Psoas muscle (tissue), 8 donors: ENCODE measurements at regions of chr11 and their contacts with region 1.

Region 1: GRCh38 chr11:129996113-129996870 is 6.3 kb downstream of the PRDM10 start:
- DNase-seq: no peak
- ATAC-seq: no peak
- H3K4me3 ChIP-seq: no peak overlapping the region
- H3K27ac ChIP-seq: no peak overlapping the region
- H3K4me1 ChIP-seq: peaks cover 33% of the 10 kb centered on the region
- H3K27me3 ChIP-seq: no peaks in the 10 kb centered on the region
- CTCF ChIP-seq: no peak

Region 2: GRCh38 chr11:129922674-129923073 is 73.6 kb before region 1 on chr11:
- intact Hi-C with region 1: loop called in 1 of 2 experiments (anchors 5 kb)
- DNase-seq: no peak
- ATAC-seq: no peak
- H3K4me3 ChIP-seq: no peak overlapping the region
- H3K27ac ChIP-seq: no peak overlapping the region
- H3K4me1 ChIP-seq: no peaks in the 10 kb centered on the region
- H3K27me3 ChIP-seq: no peaks in the 10 kb centered on the region
- CTCF ChIP-seq: no peak

Region 3: DNA sequence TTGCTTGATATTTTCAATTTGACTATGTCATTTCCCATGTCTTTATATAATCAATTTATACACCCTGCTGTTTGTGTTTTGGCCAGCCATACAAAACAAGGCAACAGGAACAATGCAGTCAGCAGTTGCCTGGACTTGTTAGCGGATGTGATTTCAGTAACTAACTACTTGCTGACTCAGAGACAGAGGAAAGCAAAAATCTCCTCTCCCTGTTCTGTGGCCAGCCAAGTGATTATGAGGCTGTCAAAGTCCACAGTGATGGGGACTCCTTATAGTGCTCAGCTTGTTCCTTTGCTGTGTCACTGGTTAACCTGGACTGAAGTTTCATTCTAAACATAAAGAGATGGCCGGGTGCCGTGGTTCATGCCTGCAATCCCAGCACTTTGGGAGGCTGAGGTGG is 40.8 kb after region 1 on chr11:
- intact Hi-C with region 1: no loop called
- DNase-seq: no peak
- ATAC-seq: no peak
- H3K4me3 ChIP-seq: no peak overlapping the region
- H3K27ac ChIP-seq: no peak overlapping the region
- H3K4me1 ChIP-seq: no peaks in the 10 kb centered on the region
- H3K27me3 ChIP-seq: peaks cover 0 to 5% (median 0%) of the 10 kb centered on the region in 3 donors
- CTCF ChIP-seq: no peak

Region 4: DNA sequence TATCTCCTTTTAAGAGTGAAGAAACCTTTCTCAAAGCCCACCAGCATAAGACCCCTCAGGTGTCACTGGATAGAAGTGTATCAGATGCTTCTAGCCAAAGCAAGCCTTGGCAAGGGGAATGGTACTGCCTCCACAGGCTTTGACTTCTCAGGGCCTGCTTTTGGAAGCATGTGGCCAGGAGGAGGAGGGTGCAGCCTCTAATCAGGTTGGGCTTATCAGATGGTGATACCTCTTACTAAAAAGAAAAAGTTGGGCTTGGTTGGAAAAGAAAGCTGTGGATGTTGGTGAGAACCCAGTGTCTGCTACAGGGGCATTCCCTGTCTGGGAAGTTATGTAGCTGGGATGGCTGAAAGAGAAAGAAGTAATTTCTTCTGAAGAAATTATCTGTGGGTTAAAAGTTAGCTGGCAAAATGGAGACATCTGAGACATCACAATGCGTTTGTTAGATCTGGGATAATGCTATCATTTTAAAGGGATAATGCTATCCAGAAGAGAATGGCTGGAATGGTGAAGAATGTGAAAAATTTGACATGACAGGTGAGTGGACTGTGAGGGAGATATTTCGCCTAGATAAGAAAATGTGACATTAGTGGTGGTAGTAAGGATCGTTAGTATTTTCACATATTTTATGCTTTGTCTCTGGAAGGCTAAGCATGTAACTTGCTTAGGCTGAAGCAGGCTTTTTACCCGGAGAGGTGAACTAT is 80.6 kb after region 1 on chr11:
- intact Hi-C with region 1: no loop called
- DNase-seq: no peak
- ATAC-seq: no peak
- H3K4me3 ChIP-seq: no peak overlapping the region
- H3K27ac ChIP-seq: no peak overlapping the region
- H3K4me1 ChIP-seq: peaks cover 17% of the 10 kb centered on the region
- H3K27me3 ChIP-seq: no peaks in the 10 kb centered on the region
- CTCF ChIP-seq: no peak